Prostate gland (tissue), 2 donors: ENCODE measurements at regions of chr18 and their contacts with region 1.

Region 1: DNA sequence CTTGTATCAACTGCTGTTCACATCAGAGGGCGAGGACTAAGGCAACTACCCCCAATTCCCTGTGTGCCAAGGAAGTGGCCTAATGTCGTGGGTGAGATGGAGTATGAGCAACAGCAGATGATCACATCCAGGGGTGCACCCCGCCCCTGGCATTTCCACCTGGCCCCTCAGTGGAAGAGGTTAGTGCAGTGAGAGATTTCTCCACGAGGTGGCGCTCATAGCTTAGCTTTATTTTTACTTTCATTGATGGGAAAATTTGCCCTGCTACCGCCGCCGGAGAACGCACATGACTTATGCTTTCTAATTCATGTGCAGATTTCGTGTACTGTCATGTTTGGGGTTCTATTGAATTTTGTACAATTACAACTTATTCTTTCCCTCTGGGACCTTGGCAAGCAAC is 470.6 kb upstream of the MEX3C start:
- DNase-seq: peak; percentile 25
- H3K4me3 ChIP-seq: no peak overlapping the region
- H3K27ac ChIP-seq: no peak overlapping the region
- H3K4me1 ChIP-seq: no peaks in the 10 kb centered on the region
- H3K27me3 ChIP-seq: no peaks in the 10 kb centered on the region
- CTCF ChIP-seq: peak; percentile 16 to 77 (median 52)
- POLR2A ChIP-seq: no peak

Region 2: DNA sequence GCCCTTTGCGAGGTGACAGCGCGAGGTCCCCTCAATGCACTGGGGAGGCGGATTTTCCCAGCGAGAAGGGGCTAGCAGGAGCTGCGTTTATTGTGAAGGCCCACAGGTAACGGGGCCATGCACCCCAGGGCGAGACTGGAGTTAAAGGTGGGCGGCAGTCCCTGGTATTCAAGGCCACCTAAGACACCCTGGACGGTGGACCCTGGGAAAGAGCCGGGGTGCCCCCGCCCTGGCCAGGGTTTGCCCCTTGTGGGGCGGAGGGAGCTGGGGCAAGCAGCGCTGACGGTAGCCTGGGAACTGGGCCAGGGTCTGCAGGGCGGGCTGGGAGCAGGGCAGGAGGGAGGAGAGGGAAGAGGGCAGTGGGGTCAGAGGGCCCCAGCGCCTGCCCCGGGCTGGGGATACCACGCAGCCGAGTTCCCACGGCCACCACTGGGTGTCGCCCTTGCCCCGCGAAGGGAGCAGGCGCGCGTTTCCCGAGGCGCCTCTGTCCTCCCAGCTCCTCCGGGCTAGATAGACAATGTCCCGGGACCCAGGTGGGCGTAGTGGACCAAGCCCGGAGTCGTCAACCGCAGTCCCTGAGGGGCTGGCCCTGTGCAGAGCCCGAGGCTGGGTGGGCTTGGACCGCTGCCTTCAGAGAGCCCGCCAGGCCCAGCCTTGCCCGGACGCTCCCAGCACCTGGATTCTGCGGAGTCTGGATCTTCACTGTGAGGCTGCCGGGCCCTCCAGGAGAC is 557.9 kb before region 1 on chr18:
- intact Hi-C with region 1: loop called (anchors 5 kb)
- DNase-seq: peak; percentile 35
- H3K4me3 ChIP-seq: no peak overlapping the region
- H3K27ac ChIP-seq: no peak overlapping the region
- H3K4me1 ChIP-seq: no peaks in the 10 kb centered on the region
- H3K27me3 ChIP-seq: no peaks in the 10 kb centered on the region
- CTCF ChIP-seq: peak; percentile 81 to 85 (median 83)
- POLR2A ChIP-seq: no peak

Region 3: GRCh38 chr18:52670896-52671295 is 1002.8 kb after region 1 on chr18:
- intact Hi-C with region 1: loop called (anchors 10 kb)
- DNase-seq: peak; percentile 9
- H3K4me3 ChIP-seq: no peak overlapping the region
- H3K27ac ChIP-seq: no peak overlapping the region
- H3K4me1 ChIP-seq: no peaks in the 10 kb centered on the region
- H3K27me3 ChIP-seq: no peaks in the 10 kb centered on the region
- CTCF ChIP-seq: peak in 2 of 4 experiments; percentile 10 to 29
- POLR2A ChIP-seq: no peak